MCF 10A (cell line): ENCODE measurements at regions of chr2 and their contacts with region 1.

Region 1: DNA sequence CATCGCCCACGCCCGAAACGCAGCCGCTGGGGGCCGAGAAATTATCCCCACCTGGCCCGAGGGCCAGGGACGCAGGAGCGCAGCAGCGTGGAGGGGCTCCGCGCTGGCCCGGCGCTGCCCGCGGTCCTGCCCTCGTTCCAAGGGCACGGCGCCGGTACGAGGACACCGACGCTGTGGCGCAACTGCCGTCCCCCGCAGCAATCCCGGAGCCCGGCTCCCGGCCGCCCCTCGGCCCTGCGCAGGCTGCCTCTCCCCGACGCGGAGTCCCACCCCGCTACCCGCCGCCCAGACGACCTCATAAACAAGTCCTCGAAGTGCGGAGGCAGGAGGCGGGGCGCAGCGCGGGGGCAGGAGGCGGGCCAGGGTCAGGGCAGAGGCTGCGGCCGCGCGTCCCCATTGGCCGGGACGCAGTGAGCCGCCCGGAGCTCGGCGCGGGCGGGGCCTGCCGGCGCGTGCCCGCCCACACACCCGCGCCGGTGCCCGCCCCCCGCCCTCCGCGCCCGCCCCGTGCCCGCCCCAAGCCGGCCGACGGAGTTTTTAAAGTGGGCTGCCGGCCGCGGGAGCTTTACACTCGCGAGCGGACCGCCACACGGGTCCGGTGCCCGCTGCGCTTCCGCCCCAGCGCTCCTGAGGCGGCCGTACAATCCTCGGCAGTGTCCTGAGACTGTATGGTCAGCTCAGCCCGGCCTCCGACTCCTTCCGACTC is at the start of gene EPAS1:
- DNase-seq: peak; percentile 87
- H3K4me3 Mint-ChIP-seq: peak within 1 kb of the TSS; percentile 86
- H3K27ac Mint-ChIP-seq: peak within 1 kb of the TSS; percentile 75
- H3K4me1 Mint-ChIP-seq: peaks cover 8% of the 10 kb centered on the region
- H3K27me3 Mint-ChIP-seq: no peaks in the 10 kb centered on the region
- CTCF ChIP-seq: no peak
- total RNA-seq, gene EPAS1: 146 and 200 TPM in 2 replicates

Region 2: DNA sequence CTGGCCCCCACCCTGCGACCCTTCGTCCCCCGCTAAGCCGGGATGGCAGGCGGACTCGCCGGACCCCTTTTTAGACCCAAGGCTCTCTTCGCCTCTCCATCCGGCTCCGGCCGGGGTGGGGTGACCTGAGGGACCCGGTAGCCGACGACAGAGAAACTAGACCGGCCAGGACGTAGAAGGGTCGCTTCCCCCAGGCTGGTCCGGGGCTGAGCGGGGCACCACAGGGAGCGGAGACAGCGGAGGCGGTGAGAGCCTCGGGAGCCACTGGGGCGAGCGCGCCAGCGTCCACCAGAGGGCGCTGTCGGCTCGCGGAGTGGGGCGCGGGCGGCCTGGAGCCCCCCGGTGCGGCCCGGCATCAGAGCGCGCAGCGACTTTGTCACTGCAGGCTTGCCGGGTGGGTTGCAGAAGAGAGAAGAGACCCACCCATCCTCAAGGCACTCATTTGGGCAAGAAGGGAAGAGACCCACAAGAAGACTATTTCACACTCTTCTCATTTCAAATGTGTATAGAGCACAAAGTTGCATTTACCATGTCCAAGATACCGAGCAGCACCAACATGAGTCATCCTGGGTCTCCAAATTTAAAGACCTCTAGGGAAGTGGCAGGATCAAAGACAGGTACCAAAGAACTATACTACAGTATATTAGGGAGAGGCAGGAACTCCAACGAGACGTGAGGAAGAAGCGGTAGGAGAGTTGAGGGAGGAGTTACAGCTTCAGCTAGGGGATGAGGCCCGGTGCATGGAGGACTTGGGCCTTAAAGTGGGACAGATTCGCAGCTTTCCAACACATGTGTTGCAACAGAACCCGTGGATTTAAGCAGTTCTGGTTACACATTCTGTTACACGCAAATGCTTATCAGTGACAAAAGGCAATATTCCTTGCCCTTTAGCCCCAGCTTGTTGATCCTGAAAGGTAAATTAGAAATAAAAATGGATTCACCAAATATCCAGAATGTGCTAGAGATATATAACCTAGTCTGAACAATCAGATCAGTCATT is 653.1 kb before region 1 on chr2:
- CTCF ChIA-PET with region 1: no interaction called
- POLR2A ChIA-PET with region 1: no interaction called
- intact Hi-C with region 1: loop called (anchors 2 kb)
- DNase-seq: peak; percentile 62
- H3K4me3 Mint-ChIP-seq: peak overlapping the region; percentile 73
- H3K27ac Mint-ChIP-seq: peak overlapping the region; percentile 37
- H3K4me1 Mint-ChIP-seq: peaks cover 17% of the 10 kb centered on the region
- H3K27me3 Mint-ChIP-seq: no peaks in the 10 kb centered on the region
- CTCF ChIP-seq: peak; percentile 96

Region 3: GRCh38 chr2:46062637-46063412 is 234.2 kb before region 1 on chr2:
- CTCF ChIA-PET with region 1: interaction called, 23 read pairs
- POLR2A ChIA-PET with region 1: interaction called, 8 read pairs
- intact Hi-C with region 1: loop called (anchors 1 kb)
- DNase-seq: peak; percentile 84
- H3K4me3 Mint-ChIP-seq: no peak overlapping the region
- H3K27ac Mint-ChIP-seq: no peak overlapping the region
- H3K4me1 Mint-ChIP-seq: peaks cover 18% of the 10 kb centered on the region
- H3K27me3 Mint-ChIP-seq: no peaks in the 10 kb centered on the region
- CTCF ChIP-seq: peak; percentile 75

Region 4: DNA sequence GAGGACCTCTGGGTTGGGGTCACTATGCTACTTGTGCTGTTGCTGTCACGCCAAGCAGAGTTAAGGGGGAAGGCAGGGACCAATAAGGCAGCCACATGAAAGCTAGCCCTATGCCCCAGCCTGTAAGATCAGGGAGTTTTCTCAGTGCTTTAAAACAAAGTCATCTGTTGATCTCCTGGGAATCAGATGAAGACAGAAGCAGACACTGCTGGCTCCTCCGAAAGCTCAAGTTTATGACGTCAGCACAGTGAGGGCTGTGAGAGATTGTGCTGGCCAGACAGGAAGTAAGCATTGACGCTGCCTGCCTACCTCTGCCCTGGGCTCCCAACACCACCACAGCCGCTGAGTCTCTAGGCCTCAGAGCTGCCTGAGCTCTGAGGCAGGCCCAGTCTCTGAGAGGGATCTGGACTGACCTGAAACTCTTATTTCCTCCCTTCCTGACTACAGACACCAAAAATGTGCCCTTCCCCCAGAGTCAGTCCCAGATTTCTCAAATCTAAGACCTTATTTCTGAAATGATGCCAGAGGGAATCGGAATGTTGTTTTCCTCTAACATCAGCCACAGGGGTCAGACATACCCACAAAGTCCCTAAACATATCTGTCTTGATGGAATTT is 117.8 kb before region 1 on chr2:
- CTCF ChIA-PET with region 1: no interaction called
- POLR2A ChIA-PET with region 1: no interaction called
- intact Hi-C with region 1: no loop called
- DNase-seq: no peak
- H3K4me3 Mint-ChIP-seq: no peak overlapping the region
- H3K27ac Mint-ChIP-seq: no peak overlapping the region
- H3K4me1 Mint-ChIP-seq: peaks cover 19% of the 10 kb centered on the region
- H3K27me3 Mint-ChIP-seq: no peaks in the 10 kb centered on the region
- CTCF ChIP-seq: no peak

Region 5: DNA sequence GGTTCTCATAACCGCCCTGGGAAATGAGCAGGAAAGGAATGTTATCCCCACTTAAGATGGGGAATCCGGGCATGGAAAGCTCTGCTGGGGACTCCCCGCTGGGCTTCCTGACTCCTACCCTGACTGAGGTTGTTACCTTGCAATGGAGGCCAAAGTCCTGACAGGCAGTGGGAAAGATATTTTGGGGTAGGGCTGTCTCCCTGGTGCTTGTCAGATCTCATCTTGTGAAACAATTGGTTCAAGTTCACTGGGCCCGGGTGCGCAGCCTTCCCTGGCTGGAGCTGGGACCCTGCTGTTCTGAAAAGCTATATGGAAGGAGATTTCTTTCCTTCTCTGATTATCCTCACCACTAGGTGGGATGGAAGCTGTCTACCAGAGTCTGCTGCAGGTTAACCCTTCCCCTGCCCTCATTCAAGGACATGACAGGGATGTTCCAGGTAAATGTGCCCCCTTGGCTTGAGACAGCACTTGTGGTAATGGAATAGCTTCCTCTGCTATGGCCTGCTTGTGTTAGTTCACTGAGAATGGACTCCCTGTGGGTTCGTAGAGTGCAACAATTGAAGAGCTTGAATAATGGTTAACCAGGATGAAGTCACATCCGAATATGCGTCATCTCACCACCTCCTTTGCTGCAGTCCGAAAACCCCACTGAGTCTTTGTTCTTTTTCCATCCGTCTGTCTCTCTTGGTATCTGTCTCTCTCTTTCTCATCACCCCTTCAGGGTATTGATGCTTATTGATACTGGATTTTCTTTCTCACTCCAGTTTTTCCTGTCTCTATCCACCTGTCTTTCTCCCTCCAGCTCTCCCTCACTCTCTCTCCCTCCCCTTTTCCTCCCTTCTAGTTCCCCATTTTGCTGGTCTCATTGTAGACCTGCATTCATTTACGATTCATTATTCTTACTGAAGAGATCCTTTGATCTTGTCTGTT is 67.6 kb before region 1 on chr2:
- CTCF ChIA-PET with region 1: interaction called, 6 read pairs
- POLR2A ChIA-PET with region 1: interaction called, 3 read pairs
- intact Hi-C with region 1: loop called (anchors 5 kb)
- DNase-seq: no peak
- H3K4me3 Mint-ChIP-seq: no peak overlapping the region
- H3K27ac Mint-ChIP-seq: no peak overlapping the region
- H3K4me1 Mint-ChIP-seq: peaks cover 14% of the 10 kb centered on the region
- H3K27me3 Mint-ChIP-seq: no peaks in the 10 kb centered on the region
- CTCF ChIP-seq: no peak

Region 6: GRCh38 chr2:46329803-46330775 is 33.1 kb after region 1 on chr2:
- CTCF ChIA-PET with region 1: interaction called, 5 read pairs
- POLR2A ChIA-PET with region 1: interaction called, 553 read pairs
- intact Hi-C with region 1: loop called (anchors 1 kb)
- DNase-seq: peak; percentile 90
- H3K4me3 Mint-ChIP-seq: peak overlapping the region; percentile 51
- H3K27ac Mint-ChIP-seq: peak overlapping the region; percentile 95
- H3K4me1 Mint-ChIP-seq: peaks cover 92% of the 10 kb centered on the region
- H3K27me3 Mint-ChIP-seq: no peaks in the 10 kb centered on the region
- CTCF ChIP-seq: no peak

Region 7: DNA sequence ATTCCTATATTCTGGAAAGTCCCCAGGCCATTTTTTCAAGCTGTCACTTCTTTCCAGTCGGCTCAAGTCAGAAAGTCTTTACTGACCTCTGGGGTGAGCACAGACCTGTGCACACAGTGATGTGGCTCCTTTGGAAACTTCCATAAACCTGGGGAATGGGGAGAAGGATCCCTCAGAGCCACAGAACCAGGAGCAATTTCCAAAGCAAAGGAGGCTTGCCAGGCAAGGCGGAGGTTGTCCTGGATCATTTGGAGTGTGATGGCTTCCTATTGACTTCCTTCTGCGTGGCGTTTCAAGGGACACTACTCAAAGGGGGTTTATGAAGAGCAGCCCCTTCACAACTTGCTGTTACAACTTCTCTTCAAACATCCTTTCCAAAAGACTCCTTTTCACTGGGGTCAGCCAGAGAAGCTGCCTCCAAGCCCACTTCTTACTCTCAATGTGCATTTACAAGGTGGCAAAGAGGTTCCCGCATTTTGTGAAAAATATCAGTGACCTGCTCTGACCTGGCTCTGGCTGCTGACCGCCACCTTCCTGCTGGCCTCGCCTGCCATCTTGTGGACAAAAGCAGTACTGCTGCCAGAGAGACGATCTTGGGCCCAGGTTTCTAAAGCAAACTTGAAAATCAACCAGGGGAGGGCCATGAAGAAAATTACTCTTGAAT is 164.2 kb after region 1 on chr2:
- CTCF ChIA-PET with region 1: interaction called, 6 read pairs
- POLR2A ChIA-PET with region 1: interaction called, 6 read pairs
- intact Hi-C with region 1: loop called (anchors 1 kb)
- DNase-seq: peak; percentile 68
- H3K4me3 Mint-ChIP-seq: no peak overlapping the region
- H3K27ac Mint-ChIP-seq: peak overlapping the region; percentile 33
- H3K4me1 Mint-ChIP-seq: peaks cover 6% of the 10 kb centered on the region
- H3K27me3 Mint-ChIP-seq: no peaks in the 10 kb centered on the region
- CTCF ChIP-seq: peak; percentile 99

Region 8: DNA sequence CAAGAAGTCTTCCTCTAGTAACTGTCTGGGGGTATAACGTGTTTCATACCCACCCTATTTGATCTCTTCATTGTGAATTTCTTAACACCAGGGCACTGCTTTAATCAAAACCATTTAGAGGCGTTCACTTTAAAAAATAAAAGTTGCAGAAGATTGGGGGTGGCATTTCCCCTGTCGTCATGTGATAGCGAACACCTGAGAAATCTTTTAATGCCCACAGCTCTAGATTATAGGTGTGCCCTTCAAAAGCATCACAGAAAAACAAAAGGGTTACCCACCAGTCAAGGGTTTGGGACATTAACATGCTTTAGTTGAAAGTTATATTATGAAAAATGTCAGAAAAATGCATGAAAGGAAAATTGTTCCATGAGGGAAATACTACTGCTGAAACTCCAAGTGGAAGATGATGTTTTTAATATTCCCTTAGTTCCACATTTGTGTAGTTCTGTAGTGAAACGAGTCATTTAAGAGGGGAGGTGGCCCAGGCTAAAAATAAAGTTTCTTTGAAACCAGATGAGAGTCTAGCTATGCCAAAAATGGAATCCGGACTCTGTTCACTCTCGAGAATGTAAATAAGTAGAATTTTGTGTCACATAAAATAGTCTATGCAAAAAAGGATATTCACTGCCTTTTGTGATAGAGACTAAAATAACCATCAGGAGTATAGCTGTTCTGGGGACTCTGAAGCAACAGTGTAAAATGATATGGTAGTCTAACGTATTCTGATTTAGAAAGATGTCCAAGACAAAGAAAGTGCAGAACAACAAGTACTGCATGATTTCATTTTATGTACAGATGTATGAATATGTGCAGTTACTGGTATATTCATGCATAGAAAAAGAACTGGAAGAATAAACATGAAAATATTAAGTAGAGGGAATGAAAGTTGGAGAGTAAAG is 277.7 kb after region 1 on chr2:
- CTCF ChIA-PET with region 1: no interaction called
- POLR2A ChIA-PET with region 1: no interaction called
- intact Hi-C with region 1: no loop called
- DNase-seq: no peak
- H3K4me3 Mint-ChIP-seq: no peak overlapping the region
- H3K27ac Mint-ChIP-seq: no peak overlapping the region
- H3K4me1 Mint-ChIP-seq: no peaks in the 10 kb centered on the region
- H3K27me3 Mint-ChIP-seq: no peaks in the 10 kb centered on the region
- CTCF ChIP-seq: no peak